ENCODE measurements at regions of chr20 and their contacts with region 1.

Region 1: GRCh38 chr20:45436732-45437391 is 20.9 kb downstream of the PIGT start:
- DNase-seq: peak; percentile 79
- H3K4me3 ChIP-seq: peak overlapping the region; percentile 38 to 49
- H3K27ac ChIP-seq: peak overlapping the region; percentile 48 to 75
- H3K4me1 ChIP-seq: no peaks in the 10 kb centered on the region
- H3K27me3 ChIP-seq: no peaks in the 10 kb centered on the region
- CTCF ChIP-seq: peak; percentile 85 to 97 (median 95)
- POLR2A ChIP-seq: no peak

Region 2: DNA sequence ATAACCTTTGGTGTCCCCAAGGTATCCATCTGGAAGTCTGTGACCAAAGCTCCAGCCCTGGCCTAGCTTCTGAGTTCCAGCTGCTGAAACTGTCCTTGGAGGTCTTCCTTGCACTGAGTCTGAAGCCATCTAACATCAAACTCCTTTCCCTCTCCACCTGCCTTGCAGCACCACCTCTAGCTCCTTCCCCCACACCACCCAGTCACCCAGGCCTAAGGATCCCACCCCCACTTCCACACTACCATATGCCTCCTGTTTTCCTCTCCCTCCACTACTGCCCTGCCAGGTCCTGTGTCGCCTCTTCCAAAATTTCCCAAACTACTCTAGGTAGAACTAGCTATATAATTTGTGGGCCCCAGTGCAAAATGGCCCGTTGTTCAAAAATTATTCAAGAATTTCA is 117.9 kb before region 1 on chr20:
- intact Hi-C with region 1: loop called (anchors 2 kb)
- DNase-seq: no peak
- H3K4me3 ChIP-seq: no peak overlapping the region
- H3K27ac ChIP-seq: no peak overlapping the region
- H3K4me1 ChIP-seq: no peaks in the 10 kb centered on the region
- H3K27me3 ChIP-seq: peaks cover 6% of the 10 kb centered on the region
- CTCF ChIP-seq: no peak
- POLR2A ChIP-seq: no peak

Region 3: GRCh38 chr20:45373353-45374100 is 63.3 kb before region 1 on chr20:
- intact Hi-C with region 1: loop called (anchors 1 kb)
- DNase-seq: peak; percentile 74
- H3K4me3 ChIP-seq: peak overlapping the region; percentile 27 to 33
- H3K27ac ChIP-seq: peak overlapping the region; percentile 48 to 62
- H3K4me1 ChIP-seq: no peaks in the 10 kb centered on the region
- H3K27me3 ChIP-seq: no peaks in the 10 kb centered on the region
- CTCF ChIP-seq: peak; percentile 69 to 94 (median 80)
- POLR2A ChIP-seq: no peak

Region 4: GRCh38 chr20:45406259-45407066 is 30.4 kb before region 1 on chr20:
- intact Hi-C with region 1: loop called (anchors 5 kb)
- DNase-seq: peak; percentile 63
- H3K4me3 ChIP-seq: peak overlapping the region; percentile 72 to 87
- H3K27ac ChIP-seq: peak overlapping the region; percentile 82 to 89
- H3K4me1 ChIP-seq: peaks cover 8% of the 10 kb centered on the region
- H3K27me3 ChIP-seq: no peaks in the 10 kb centered on the region
- CTCF ChIP-seq: peak in 1 of 4 experiments; percentile 8
- POLR2A ChIP-seq: peak; percentile 54

Region 5: DNA sequence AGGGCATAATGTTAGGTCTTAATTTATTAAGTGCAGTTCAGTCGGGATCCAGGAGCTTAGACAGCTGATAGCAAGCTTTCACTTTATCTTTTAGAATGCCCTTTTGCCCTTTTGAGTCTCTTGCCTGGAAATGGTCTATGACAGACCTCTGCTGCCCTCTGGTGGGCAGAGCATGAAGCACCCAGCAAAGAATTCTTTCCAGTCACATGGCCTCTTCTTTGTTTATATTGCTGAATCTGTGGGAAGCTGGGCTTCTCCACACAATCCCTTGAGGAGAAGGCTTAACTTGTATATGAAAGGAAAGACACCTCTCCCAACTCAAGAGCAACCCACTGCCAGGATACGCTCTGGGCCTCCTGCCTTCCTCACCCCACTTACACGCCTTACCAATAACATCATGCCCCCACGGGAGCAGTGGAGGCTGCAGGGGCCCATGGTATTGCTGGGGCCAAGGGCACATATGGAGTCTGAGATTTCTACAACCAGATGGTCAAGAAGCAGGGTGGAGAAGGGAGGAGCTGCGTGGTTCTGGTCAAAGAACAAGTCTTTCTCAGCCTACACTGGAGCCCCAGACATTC is 334.4 kb after region 1 on chr20:
- intact Hi-C with region 1: loop called (anchors 10 kb)
- DNase-seq: peak; percentile 64
- H3K4me3 ChIP-seq: no peak overlapping the region
- H3K27ac ChIP-seq: no peak overlapping the region
- H3K4me1 ChIP-seq: no peaks in the 10 kb centered on the region
- H3K27me3 ChIP-seq: no peaks in the 10 kb centered on the region
- CTCF ChIP-seq: peak; percentile 94 to 96 (median 95)
- POLR2A ChIP-seq: no peak

Measured in prostate gland (tissue), 2 donors.